PC-9 (cell line): ENCODE measurements at regions of chr4 and their contacts with region 1.

Region 1: GRCh38 chr4:76909711-76910110 is 11.8 kb upstream of the SOWAHB start:
- DNase-seq: no peak
- H3K4me3 ChIP-seq: no peak overlapping the region
- H3K27ac ChIP-seq: no peak overlapping the region
- H3K4me1 ChIP-seq: no peaks in the 10 kb centered on the region
- H3K27me3 ChIP-seq: no peaks in the 10 kb centered on the region
- CTCF ChIP-seq: no peak

Region 2: DNA sequence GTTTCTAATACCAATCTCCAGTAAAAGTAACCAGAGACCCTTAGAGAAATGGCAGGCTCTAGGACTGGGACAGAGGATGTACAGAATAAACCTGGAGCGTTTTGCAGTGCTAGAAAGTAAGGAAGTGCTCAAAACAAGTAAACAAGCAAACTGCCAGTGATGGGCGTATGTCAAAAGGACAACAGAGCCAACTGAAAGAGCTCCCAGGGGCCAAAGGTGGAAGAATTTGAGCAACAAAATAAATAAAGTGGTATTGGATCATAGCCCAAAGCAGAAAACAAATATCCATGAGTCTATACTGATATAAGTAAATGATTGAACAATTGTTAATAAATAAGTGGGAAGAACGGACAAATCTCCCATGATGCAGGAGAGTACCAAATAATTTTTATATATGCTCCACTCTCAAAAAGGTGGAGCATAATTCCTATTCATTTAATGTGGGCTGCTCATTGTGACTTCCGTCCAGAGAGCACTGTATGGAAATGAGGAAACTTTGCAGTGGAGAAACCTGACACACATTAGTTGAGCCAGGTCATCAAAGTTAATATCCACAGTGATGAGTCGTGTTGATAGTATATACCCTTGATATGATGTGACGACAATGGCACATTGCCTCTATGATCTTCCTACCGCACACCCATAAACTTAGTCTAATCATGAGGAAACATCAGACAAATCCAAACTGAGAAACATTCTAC is 22.0 kb after region 1 on chr4:
- CTCF ChIA-PET with region 1: no interaction called
- POLR2A ChIA-PET with region 1: interaction called, 10 read pairs
- intact Hi-C with region 1: no loop called
- DNase-seq: no peak
- H3K4me3 ChIP-seq: no peak overlapping the region
- H3K27ac ChIP-seq: no peak overlapping the region
- H3K4me1 ChIP-seq: no peaks in the 10 kb centered on the region
- H3K27me3 ChIP-seq: no peaks in the 10 kb centered on the region
- CTCF ChIP-seq: no peak